ENCODE measurements at regions of chr11 and their contacts with region 1.

Region 1: GRCh38 chr11:35013514-35014233 is 97.3 kb downstream of the PDHX start:
- DNase-seq: no peak
- H3K4me3 ChIP-seq: no peak overlapping the region
- H3K27ac ChIP-seq: no peak overlapping the region
- H3K4me1 ChIP-seq: peaks cover 0 to 12% of the 10 kb centered on the region in 2 donors
- H3K27me3 ChIP-seq: no peaks in the 10 kb centered on the region
- CTCF ChIP-seq: no peak
- POLR2A ChIP-seq: no peak

Region 2: GRCh38 chr11:35223371-35223796 is 209.7 kb after region 1 on chr11:
- intact Hi-C with region 1: loop called in 1 of 2 experiments (anchors 10 kb)
- DNase-seq: no peak
- H3K4me3 ChIP-seq: no peak overlapping the region
- H3K27ac ChIP-seq: no peak overlapping the region
- H3K4me1 ChIP-seq: peaks cover 0 to 8% of the 10 kb centered on the region in 2 donors
- H3K27me3 ChIP-seq: no peaks in the 10 kb centered on the region
- CTCF ChIP-seq: no peak
- POLR2A ChIP-seq: no peak

Region 3: GRCh38 chr11:35321532-35322359 is 308.1 kb after region 1 on chr11:
- intact Hi-C with region 1: no loop called
- DNase-seq: peak in 3 of 7 donors; percentile 56 to 68 (median 66)
- H3K4me3 ChIP-seq: no peak overlapping the region
- H3K27ac ChIP-seq: peak overlapping the region in 3 of 5 donors; percentile 10 to 64 (median 54)
- H3K4me1 ChIP-seq: peaks cover 0 to 5% of the 10 kb centered on the region in 2 donors
- H3K27me3 ChIP-seq: no peaks in the 10 kb centered on the region
- CTCF ChIP-seq: no peak
- POLR2A ChIP-seq: no peak

Region 4: DNA sequence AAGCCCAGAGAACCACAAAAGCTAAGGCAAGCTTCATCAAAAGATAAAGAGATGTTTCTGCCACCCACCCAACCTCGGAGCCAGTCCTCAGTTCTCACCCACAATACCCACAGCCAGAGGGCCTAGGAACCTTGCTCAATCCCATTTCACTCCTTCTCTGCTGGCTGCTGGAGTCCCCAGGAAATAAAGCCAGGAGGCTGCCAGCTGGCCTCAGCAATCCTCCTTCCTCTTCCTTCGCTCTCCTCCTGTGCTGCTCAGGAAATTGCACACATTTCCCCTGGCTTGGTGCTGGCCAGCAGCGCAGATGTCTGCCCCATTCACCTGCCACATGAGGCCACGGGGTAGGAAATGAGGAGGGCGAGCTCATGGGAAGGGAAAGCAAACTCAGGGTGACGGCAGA is 838.4 kb after region 1 on chr11:
- intact Hi-C with region 1: no loop called
- DNase-seq: peak in 6 of 7 donors; percentile 17 to 54 (median 30)
- H3K4me3 ChIP-seq: no peak overlapping the region
- H3K27ac ChIP-seq: no peak overlapping the region
- H3K4me1 ChIP-seq: no peaks in the 10 kb centered on the region
- H3K27me3 ChIP-seq: no peaks in the 10 kb centered on the region
- CTCF ChIP-seq: peak in 1 of 6 experiments; percentile 15
- POLR2A ChIP-seq: no peak

Measured in adrenal gland (tissue), 19 donors.